Natural killer cell (primary cell): ENCODE measurements at regions of chr12 and their contacts with region 1.

Region 1: GRCh38 chr12:25495331-25496097 is 57.6 kb downstream of the LMNTD1 start:
- DNase-seq: no peak
- ATAC-seq: no peak
- H3K4me3 ChIP-seq: no peak overlapping the region
- H3K4me3 Mint-ChIP-seq: no peak overlapping the region
- H3K27ac ChIP-seq: peak overlapping the region; percentile 66
- H3K27ac Mint-ChIP-seq: peak overlapping the region; percentile 55 to 70
- H3K4me1 ChIP-seq: peaks cover 5% of the 10 kb centered on the region
- H3K4me1 Mint-ChIP-seq: peaks cover 19 to 22% of the 10 kb centered on the region in 2 donors
- H3K27me3 ChIP-seq: no peaks in the 10 kb centered on the region
- H3K27me3 Mint-ChIP-seq: peaks cover 0 to 4% of the 10 kb centered on the region in 2 donors
- CTCF ChIP-seq: no peak

Region 2: DNA sequence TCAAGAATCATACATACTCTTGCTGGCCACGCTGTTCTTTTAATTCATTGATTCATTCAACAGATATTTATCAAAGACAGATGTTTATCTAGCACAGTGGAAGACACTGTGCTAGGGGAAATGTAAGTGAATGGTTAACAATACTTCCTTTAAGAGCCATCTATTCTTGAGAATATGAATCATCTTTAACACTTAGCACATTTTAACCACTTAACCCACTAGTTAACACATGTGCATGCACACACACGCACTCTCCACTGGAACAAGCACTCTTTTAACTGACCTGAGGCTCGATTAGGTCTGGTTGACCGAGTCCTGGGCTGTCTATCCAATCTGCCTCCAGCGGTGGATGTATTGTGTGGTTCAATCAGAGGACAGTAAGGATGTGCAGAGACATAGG is 23.0 kb after region 1 on chr12:
- intact Hi-C with region 1: loop called (anchors 1 kb)
- DNase-seq: peak; percentile 4 to 41
- ATAC-seq: peak; percentile 90 to 99 (median 94)
- H3K4me3 ChIP-seq: no peak overlapping the region
- H3K4me3 Mint-ChIP-seq: peak overlapping the region; percentile 83
- H3K27ac ChIP-seq: no peak overlapping the region
- H3K27ac Mint-ChIP-seq: peak overlapping the region; percentile 52 to 75
- H3K4me1 ChIP-seq: peaks cover 6% of the 10 kb centered on the region
- H3K4me1 Mint-ChIP-seq: peaks cover 14 to 19% of the 10 kb centered on the region in 2 donors
- H3K27me3 ChIP-seq: no peaks in the 10 kb centered on the region
- H3K27me3 Mint-ChIP-seq: peaks cover 0 to 7% of the 10 kb centered on the region in 2 donors
- CTCF ChIP-seq: no peak